OCI-LY7 (cell line): ENCODE measurements at regions of chr1 and their contacts with region 1.

Region 1: GRCh38 chr1:6359216-6360116 is 34.1 kb downstream of the ACOT7 start:
- DNase-seq: peak; percentile 24
- H3K4me3 ChIP-seq: no peak overlapping the region
- H3K27ac ChIP-seq: no peak overlapping the region
- H3K4me1 ChIP-seq: peaks cover 13% of the 10 kb centered on the region
- CTCF ChIP-seq: no peak

Region 2: DNA sequence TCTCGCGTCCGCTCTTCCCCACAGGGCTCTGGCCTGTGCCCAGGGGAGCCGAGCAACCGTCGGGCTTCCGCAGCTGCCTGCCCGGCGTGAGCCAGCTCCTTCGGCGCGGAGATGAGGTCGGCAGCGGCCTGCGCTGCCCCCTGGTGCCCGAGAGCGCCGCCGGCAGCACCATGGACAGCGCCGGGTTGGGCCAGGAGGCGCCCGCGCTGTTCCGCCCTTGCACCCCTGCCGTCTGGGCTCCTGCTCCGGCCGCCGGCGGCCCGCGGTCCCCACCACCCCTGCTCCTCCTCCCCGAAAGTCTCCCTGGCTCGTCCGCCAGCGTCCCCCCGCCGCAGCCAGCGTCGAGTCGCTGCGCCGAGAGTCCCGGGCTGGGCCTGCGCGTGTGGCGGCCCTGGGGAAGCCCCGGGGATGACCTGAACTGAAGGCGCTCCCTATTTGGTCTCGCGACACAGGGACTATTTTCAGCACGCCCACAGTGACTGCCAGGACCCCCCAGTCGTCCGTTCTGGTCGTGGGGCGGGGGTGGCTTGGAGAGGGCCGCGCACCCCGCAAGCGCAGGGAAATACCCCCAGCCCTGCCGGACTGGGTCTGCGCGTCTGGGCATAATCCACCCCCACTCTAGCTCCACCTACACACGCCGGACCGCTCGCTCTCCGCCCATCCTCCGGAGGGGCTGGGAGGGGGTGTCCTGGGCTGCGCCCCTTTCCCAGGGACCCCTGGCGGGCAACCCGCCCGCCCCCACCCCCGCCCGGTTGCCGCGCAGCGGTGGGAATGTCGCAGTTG is 114.2 kb before region 1 on chr1:
- CTCF ChIA-PET with region 1: no interaction called
- POLR2A ChIA-PET with region 1: no interaction called
- intact Hi-C with region 1: loop called (anchors 5 kb)
- DNase-seq: peak; percentile 74
- H3K4me3 ChIP-seq: no peak overlapping the region
- H3K27ac ChIP-seq: no peak overlapping the region
- H3K4me1 ChIP-seq: no peaks in the 10 kb centered on the region
- CTCF ChIP-seq: peak; percentile 71

Region 3: GRCh38 chr1:6393400-6394187 is 34.1 kb after region 1 on chr1 and contains the start of gene ACOT7:
- CTCF ChIA-PET with region 1: no interaction called
- POLR2A ChIA-PET with region 1: interaction called, 3 read pairs
- intact Hi-C with region 1: loop called (anchors 2 kb)
- DNase-seq: peak; percentile 92
- H3K4me3 ChIP-seq: peak within 1 kb of the TSS; percentile 78
- H3K27ac ChIP-seq: peak within 1 kb of the TSS; percentile 68
- H3K4me1 ChIP-seq: peaks cover 14% of the 10 kb centered on the region
- CTCF ChIP-seq: 0 out of 2 replicates have a peak, but pooled peaks have one; percentile 14
- total RNA-seq, gene ACOT7: 16.8 and 23.4 TPM in 2 replicates

Region 4: GRCh38 chr1:6401673-6402072 is 42.2 kb after region 1 on chr1:
- CTCF ChIA-PET with region 1: interaction called, 3 read pairs
- POLR2A ChIA-PET with region 1: no interaction called
- intact Hi-C with region 1: loop called (anchors 2 kb)
- DNase-seq: no peak
- H3K4me3 ChIP-seq: no peak overlapping the region
- H3K27ac ChIP-seq: no peak overlapping the region
- H3K4me1 ChIP-seq: no peaks in the 10 kb centered on the region
- CTCF ChIP-seq: no peak

Region 5: DNA sequence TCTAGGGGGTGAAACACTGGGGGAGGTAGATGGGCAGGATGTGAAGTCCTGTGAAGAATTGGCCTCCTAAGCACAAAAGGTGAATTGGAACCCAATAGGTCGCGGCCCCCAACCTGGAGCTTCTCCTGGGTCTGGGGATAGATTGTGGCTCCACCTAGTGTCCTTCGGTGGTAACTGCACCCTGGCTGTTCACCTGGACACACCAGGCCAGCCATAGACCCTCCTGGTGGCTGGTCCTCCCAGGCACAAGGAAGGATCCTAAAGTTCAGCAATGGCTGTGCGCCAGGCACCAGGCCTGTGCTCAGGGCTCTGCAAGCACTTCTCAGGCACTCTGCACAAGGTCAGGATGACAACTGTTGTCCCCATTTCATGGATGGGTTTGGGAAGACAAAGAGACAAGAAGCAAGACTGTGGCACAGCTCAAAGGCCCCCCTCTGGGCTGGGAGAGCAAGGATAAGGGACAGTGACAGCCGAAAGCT is 78.6 kb after region 1 on chr1:
- CTCF ChIA-PET with region 1: no interaction called
- POLR2A ChIA-PET with region 1: no interaction called
- intact Hi-C with region 1: loop called (anchors 1 kb)
- DNase-seq: peak; percentile 68
- H3K4me3 ChIP-seq: no peak overlapping the region
- H3K27ac ChIP-seq: no peak overlapping the region
- H3K4me1 ChIP-seq: no peaks in the 10 kb centered on the region
- CTCF ChIP-seq: peak; percentile 85

Region 6: DNA sequence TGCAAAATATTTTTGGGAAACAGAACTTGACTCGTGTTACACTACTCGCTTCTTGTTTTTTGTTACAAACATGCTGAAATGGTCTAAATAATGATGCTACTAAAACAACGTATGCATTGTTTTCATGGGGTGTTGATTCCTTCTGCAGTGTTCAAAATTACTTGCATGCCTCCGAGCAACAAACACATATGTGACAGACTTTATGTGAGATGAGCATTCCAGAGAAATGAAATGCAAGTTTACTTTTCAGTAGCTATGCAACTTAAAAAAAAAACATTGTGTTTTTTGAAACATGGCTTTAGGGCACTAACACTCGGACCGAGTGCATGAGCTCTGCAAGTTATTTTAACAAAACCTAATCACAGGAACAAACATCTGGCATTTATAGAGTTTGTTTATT is 510.6 kb after region 1 on chr1:
- CTCF ChIA-PET with region 1: no interaction called
- POLR2A ChIA-PET with region 1: no interaction called
- intact Hi-C with region 1: loop called (anchors 5 kb)
- DNase-seq: no peak
- H3K4me3 ChIP-seq: no peak overlapping the region
- H3K27ac ChIP-seq: no peak overlapping the region
- H3K4me1 ChIP-seq: no peaks in the 10 kb centered on the region
- CTCF ChIP-seq: no peak